Left cardiac atrium (tissue), 4 donors: ENCODE measurements at regions of chr6 and their contacts with region 1.

Region 1: DNA sequence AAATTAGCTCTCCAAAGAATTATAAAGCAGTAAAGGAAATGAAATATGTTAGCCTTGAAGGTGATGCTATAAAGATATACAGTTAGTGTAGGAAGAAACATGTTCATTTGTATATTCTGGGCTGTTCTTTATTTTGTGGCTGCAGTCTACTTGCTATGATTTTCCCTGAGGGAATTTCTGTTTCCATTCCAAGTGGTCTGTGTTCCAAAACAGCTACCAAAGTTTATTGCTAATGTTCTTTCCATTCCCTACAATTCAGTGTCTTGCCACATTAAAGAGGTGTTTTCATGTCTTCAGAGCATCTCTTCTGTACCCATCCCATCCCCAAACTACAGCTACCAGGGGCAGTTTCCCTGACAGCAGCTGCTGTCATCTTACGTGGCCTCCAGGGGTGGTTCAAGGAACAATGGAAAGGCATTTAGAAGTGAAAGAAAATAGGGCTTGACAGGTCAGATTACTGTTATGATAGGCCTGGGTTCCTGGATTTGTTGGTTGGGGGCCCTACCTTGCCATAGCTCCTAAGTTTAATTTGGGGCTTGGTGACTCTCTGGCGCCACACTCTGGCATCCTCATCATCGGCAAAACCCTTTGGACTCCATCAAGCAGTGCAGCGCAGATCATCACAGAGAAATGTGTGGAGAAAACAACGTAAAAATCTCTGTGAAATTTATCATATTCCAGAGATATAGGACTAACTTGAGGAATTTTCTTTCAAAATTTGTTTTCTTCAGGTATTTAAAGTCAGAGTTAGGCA is 33.8 kb upstream of the AIG1 start:
- DNase-seq: peak; percentile 36
- ATAC-seq: peak; percentile 70

Region 2: GRCh38 chr6:142885182-142885867 is 141.5 kb before region 1 on chr6:
- intact Hi-C with region 1: no loop called
- DNase-seq: peak; percentile 35
- ATAC-seq: peak; percentile 89 to 91

Region 3: GRCh38 chr6:142952614-142953013 is 74.3 kb before region 1 on chr6:
- intact Hi-C with region 1: loop called in 1 of 2 experiments (anchors 5 kb)
- DNase-seq: no peak
- ATAC-seq: no peak

Region 4: DNA sequence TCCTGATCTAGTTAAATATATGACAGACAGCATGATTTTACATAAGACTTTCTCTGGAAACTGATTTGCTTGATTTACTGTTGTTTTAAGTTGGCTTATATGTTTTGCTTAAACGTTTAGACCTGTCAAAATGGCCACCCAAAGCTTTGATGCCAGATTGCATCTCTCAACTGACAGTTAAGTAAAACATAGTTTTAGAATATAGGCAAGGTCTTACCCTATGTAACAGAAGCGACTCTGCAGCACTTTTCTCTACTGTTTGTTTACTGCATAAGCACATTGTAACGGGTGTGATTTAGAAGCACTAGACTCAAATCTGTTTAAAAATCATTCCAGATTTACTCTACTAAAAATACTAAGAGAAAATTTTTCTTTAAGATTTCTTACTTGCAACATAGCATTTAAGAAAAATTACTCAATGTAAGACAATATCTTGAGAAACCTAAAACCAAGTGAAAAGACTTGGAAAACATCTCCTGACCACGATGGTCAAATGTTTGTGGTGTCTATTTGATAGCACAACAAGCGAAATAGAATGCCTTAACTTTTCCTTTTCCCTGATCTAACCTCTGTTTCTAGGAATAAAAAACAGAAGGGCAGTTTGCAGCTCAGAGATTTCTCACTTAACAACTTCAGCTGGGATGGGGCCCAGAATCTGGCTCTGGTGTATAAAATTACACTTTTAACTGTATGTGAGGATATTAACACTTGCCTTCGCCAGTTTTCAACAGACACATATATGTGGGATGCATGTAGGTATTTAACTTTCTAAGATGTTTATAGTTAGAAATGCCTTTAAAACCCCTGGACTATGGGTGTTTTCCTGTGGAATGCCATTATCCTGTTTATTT is 81.3 kb after region 1 on chr6:
- intact Hi-C with region 1: no loop called
- DNase-seq: no peak
- ATAC-seq: no peak